ENCODE measurements at regions of chr11 and their contacts with region 1.

Region 1: DNA sequence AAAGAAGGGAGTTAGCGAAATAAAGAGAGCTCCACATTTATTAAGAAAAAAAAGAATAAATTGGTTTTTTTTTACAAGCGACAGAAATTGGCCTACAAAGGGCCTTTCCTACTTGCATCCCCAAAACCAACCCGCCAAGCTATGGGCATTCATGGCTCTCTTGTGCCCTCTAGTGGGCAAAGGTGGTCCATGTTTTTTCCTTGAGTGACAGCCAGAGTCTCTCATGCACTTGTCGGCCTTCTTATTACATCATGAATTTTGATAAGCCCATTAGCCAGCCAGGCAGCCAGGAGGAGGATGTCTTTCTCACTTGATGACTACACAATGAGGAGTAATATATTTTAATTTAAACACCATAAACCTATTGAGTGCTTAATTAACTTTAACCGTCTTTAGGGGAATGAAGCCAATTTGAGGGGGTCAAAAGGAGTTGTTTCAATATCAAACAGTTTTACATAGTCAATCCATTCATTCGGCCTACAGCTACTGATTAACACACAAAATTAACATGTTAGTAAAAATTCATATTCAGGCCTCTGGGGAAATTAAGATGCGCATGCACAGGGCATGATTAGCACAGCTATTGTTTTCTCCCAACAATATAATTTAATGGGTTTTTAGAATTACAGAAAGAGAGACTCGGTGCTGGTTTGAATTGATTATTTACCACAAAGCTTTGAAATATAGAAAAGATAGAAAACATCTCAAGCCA is 85.5 kb downstream of the RCN1 start:
- DNase-seq: peak; percentile 52 to 80 (median 73)
- H3K4me3 ChIP-seq: no peak overlapping the region
- H3K27ac ChIP-seq: no peak overlapping the region
- H3K4me1 ChIP-seq: no peaks in the 10 kb centered on the region
- H3K27me3 ChIP-seq: no peaks in the 10 kb centered on the region
- CTCF ChIP-seq: peak; percentile 54 to 76 (median 72)
- EP300 ChIP-seq: no peak
- POLR2A ChIP-seq: no peak

Region 2: GRCh38 chr11:31240338-31240904 is 936.0 kb before region 1 on chr11:
- intact Hi-C with region 1: loop called in 1 of 4 experiments (anchors 10 kb)
- DNase-seq: no peak
- H3K4me3 ChIP-seq: no peak overlapping the region
- H3K27ac ChIP-seq: no peak overlapping the region
- H3K4me1 ChIP-seq: no peaks in the 10 kb centered on the region
- H3K27me3 ChIP-seq: no peaks in the 10 kb centered on the region
- CTCF ChIP-seq: no peak
- EP300 ChIP-seq: no peak
- POLR2A ChIP-seq: no peak

Measured in ovary (tissue), 10 donors.